ENCODE measurements at regions of chr2 and their contacts with region 1.

Region 1: GRCh38 chr2:190718652-190719526 is 70.0 kb downstream of the NAB1 start:
- DNase-seq: peak; percentile 86
- ATAC-seq: peak; percentile 64
- H3K4me3 Mint-ChIP-seq: peak overlapping the region; percentile 16
- H3K27ac Mint-ChIP-seq: peak overlapping the region; percentile 86
- H3K4me1 Mint-ChIP-seq: peaks cover 73% of the 10 kb centered on the region
- H3K27me3 Mint-ChIP-seq: no peaks in the 10 kb centered on the region

Region 2: GRCh38 chr2:190319555-190320498 is 399.1 kb before region 1 on chr2 and contains the start of gene HIBCH:
- CTCF ChIA-PET with region 1: no interaction called
- POLR2A ChIA-PET with region 1: no interaction called
- intact Hi-C with region 1: loop called in 1 of 2 experiments (anchors 1 kb)
- DNase-seq: peak; percentile 95
- ATAC-seq: peak; percentile 87
- H3K4me3 Mint-ChIP-seq: peak within 1 kb of the TSS; percentile 85
- H3K27ac Mint-ChIP-seq: peak within 1 kb of the TSS; percentile 93
- H3K4me1 Mint-ChIP-seq: peaks cover 59% of the 10 kb centered on the region
- H3K27me3 Mint-ChIP-seq: no peaks in the 10 kb centered on the region
- total RNA-seq, gene HIBCH: 23.1 to 23.7 TPM

Region 3: DNA sequence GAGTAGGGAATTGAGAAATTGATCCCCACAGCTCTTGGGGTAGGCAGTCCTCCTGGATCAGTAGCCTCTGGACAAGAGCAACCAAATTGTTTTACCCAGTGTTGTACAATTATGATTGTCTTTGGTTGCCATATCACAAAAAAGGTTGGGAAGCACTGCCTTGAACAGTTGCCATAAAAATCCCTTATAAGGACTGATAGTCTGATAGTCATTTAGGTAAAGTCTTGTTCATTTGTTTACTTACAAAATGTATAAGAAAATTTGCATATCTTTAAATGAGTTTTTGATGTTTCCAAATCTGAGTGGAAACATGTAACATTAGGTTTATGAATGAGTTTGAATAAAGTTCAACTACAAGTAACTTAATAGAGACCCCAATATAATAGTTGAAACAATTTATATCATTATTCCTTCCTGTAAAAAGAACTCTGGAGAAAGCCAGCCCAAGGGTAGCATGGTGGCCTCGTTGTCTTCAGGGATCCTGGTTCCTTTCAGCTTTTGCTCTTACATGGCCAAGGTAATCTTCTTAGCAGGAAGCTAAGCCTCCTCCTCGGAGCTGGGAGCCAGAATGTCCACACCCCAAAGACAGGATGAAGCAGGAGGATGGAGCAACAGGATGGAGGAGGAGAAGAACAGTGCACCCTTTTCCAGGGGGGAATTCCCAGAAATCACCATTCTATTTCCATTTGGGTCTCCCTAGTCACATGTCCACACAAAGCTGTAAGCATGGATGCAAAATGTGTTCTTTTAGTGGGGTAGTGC is 148.7 kb before region 1 on chr2:
- CTCF ChIA-PET with region 1: no interaction called
- POLR2A ChIA-PET with region 1: no interaction called
- intact Hi-C with region 1: loop called in 1 of 2 experiments (anchors 1 kb)
- DNase-seq: no peak
- ATAC-seq: peak; percentile 44
- H3K4me3 Mint-ChIP-seq: no peak overlapping the region
- H3K27ac Mint-ChIP-seq: no peak overlapping the region
- H3K4me1 Mint-ChIP-seq: peaks cover 24% of the 10 kb centered on the region
- H3K27me3 Mint-ChIP-seq: no peaks in the 10 kb centered on the region

Region 4: GRCh38 chr2:190695739-190696138 is 23.1 kb before region 1 on chr2:
- CTCF ChIA-PET with region 1: interaction called, 4 read pairs
- POLR2A ChIA-PET with region 1: interaction called, 6 read pairs
- intact Hi-C with region 1: loop called (anchors 1 kb)
- DNase-seq: peak; percentile 52
- ATAC-seq: peak; percentile 85
- H3K4me3 Mint-ChIP-seq: no peak overlapping the region
- H3K27ac Mint-ChIP-seq: peak overlapping the region; percentile 44
- H3K4me1 Mint-ChIP-seq: peaks cover 30% of the 10 kb centered on the region
- H3K27me3 Mint-ChIP-seq: no peaks in the 10 kb centered on the region

Region 5: GRCh38 chr2:190759749-190760213 is 40.9 kb after region 1 on chr2:
- CTCF ChIA-PET with region 1: no interaction called
- POLR2A ChIA-PET with region 1: interaction called, 7 read pairs
- intact Hi-C with region 1: loop called (anchors 2 kb)
- DNase-seq: no peak
- ATAC-seq: no peak
- H3K4me3 Mint-ChIP-seq: peak overlapping the region; percentile 15
- H3K27ac Mint-ChIP-seq: no peak overlapping the region
- H3K4me1 Mint-ChIP-seq: peaks cover 54% of the 10 kb centered on the region
- H3K27me3 Mint-ChIP-seq: no peaks in the 10 kb centered on the region

Region 6: DNA sequence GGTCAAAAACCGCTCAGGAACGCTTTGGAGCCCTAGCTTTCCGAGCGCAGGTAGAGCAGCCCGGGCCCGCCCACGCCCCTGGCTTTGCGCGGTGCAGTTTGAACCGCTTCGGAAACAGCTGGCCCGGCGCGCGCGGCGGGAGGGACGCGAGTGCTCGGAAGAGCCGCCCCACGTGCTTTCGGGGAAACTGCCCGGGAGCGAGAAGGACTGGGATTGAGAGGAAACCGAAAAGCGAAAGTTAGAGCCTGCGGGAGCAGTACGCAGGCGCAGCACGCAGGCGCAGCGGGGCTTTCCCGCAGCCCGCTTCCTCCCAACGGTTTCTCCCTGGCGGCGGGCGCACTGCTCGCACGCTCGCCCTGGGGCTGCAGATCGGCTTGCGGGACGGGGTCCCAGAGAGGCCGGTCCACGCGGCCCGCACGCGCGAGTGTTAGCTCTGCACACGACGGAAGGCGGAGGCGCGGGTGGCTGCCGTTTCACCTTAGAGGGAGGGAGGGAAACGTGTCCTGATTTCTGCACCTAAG is 301.4 kb after region 1 on chr2:
- CTCF ChIA-PET with region 1: no interaction called
- POLR2A ChIA-PET with region 1: no interaction called
- intact Hi-C with region 1: loop called (anchors 1 to 5 kb)
- DNase-seq: peak; percentile 96
- ATAC-seq: peak; percentile 62
- H3K4me3 Mint-ChIP-seq: no peak overlapping the region
- H3K27ac Mint-ChIP-seq: no peak overlapping the region
- H3K4me1 Mint-ChIP-seq: peaks cover 37% of the 10 kb centered on the region
- H3K27me3 Mint-ChIP-seq: no peaks in the 10 kb centered on the region

Region 7: GRCh38 chr2:191677646-191678436 is 959.0 kb after region 1 on chr2 and contains the start of gene NABP1:
- CTCF ChIA-PET with region 1: no interaction called
- POLR2A ChIA-PET with region 1: no interaction called
- intact Hi-C with region 1: loop called in 1 of 2 experiments (anchors 5 kb)
- DNase-seq: peak; percentile 100
- ATAC-seq: peak; percentile 79
- H3K4me3 Mint-ChIP-seq: peak within 1 kb of the TSS; percentile 97
- H3K27ac Mint-ChIP-seq: peak within 1 kb of the TSS; percentile 99
- H3K4me1 Mint-ChIP-seq: peaks cover 45% of the 10 kb centered on the region
- H3K27me3 Mint-ChIP-seq: no peaks in the 10 kb centered on the region
- total RNA-seq, gene NABP1: 52.4 to 53.9 TPM

Measured in activated CD4-positive, alpha-beta T cell treated with anti-CD3 and anti-CD28 coated beads for 36 hours (primary cell).